H1 (cell line): ENCODE measurements at regions of chr7 and their contacts with region 1.

Region 1: DNA sequence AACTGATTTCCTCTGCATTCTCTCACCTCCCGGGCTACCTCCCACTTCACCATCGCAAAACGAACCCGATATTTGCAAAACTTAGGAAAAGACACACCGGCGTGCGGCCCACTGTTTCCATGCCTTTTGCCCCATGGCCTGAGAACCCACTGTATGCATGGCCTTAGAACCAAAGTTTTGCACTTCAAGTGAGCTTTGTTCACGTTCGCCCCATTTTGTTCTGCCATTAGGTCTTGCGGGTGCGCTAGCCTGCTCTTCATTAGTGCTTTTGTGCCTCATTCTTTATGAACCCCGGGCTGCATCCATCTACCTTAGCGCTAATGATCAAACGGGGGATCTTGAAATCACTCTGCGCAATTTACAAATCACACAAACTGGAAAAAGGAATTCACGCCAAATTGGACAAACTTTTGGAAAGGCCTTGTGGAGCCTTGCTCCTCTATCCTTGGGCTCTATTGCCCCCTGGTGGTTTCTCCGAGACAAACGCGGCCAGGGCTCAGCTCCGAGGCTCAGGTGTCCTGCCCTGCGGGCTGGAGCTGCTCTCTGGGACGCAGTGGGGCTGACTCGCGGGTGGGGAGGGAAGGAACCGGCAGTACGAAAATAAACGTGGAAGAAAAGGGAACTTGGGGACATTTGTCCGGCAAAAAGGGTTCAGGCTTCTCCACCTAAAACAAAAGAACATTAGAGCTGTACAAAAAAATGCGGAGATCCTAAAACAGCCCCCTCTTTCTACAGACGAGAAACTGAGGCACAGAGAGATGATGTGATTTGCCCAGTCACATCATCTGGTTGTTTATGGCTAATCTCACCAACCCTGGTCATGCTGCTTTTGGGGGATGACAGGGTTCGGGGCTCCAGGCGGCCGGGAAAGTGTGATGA is 300.4 kb upstream of the NFE2L3 start:
- DNase-seq: peak in 1 of 2 experiments; percentile 91
- H3K4me3 ChIP-seq: peak overlapping the region; percentile 22 to 68 (median 34)
- H3K27ac ChIP-seq: no peak overlapping the region
- H3K4me1 ChIP-seq: peaks cover 0 to 5% (median 3%) of the 10 kb centered on the region in 4 experiments; a peak in 5 of 7 replicates
- H3K27me3 ChIP-seq: peaks cover 16 to 44% (median 32%) of the 10 kb centered on the region in 4 experiments; a peak in 6 of 7 replicates
- CTCF ChIP-seq: peak; percentile 74 to 89 (median 88)
- EP300 ChIP-seq: no peak
- POLR2A ChIP-seq: no peak
- RAD21 ChIP-seq: peak; percentile 94 to 95

Region 2: GRCh38 chr7:25578991-25579777 is 272.4 kb before region 1 on chr7:
- CTCF ChIA-PET with region 1: interaction called, 10 read pairs
- POLR2A ChIA-PET with region 1: interaction called, 3 read pairs
- DNase-seq: no peak
- H3K4me3 ChIP-seq: peak overlapping the region in 1 of 4 experiments; percentile 4; a peak in 1 of 8 replicates
- H3K27ac ChIP-seq: no peak overlapping the region
- H3K4me1 ChIP-seq: no peaks in the 10 kb centered on the region
- H3K27me3 ChIP-seq: peaks cover 0 to 2% (median under 1%) of the 10 kb centered on the region in 4 experiments; a peak in 3 of 7 replicates
- CTCF ChIP-seq: no peak
- EP300 ChIP-seq: no peak
- POLR2A ChIP-seq: no peak
- RAD21 ChIP-seq: no peak

Region 3: DNA sequence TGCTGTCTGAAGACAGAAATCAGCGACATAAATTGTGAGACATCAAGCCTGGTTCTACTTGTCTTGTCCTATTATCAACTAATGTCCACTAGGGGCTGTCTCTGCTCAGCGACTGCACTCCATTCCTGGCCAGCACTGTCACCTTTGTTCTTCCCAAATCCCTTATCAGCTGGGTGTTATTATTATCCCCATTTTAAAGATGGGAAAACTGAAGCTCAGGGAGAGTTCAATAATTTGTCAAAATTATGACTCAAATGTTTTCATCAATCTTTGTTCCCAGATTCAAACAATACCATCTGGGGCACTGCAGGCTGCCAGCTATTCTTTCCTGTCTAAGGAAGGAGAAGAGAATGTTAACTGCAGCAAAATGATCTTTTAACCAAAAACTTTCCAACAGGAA is 131.1 kb before region 1 on chr7:
- CTCF ChIA-PET with region 1: interaction called, 25 read pairs
- POLR2A ChIA-PET with region 1: no interaction called
- DNase-seq: no peak
- H3K4me3 ChIP-seq: no peak overlapping the region
- H3K27ac ChIP-seq: no peak overlapping the region
- H3K4me1 ChIP-seq: peaks cover 0 to 2% (median 0%) of the 10 kb centered on the region in 4 experiments; a peak in 3 of 7 replicates
- H3K27me3 ChIP-seq: no peaks in the 10 kb centered on the region
- CTCF ChIP-seq: peak; percentile 51 to 74 (median 52)
- EP300 ChIP-seq: no peak
- POLR2A ChIP-seq: no peak
- RAD21 ChIP-seq: peak; percentile 64 to 76

Region 4: GRCh38 chr7:25839084-25839769 is 12.3 kb before region 1 on chr7:
- CTCF ChIA-PET with region 1: interaction called, 37 read pairs
- POLR2A ChIA-PET with region 1: no interaction called
- DNase-seq: no peak
- H3K4me3 ChIP-seq: no peak overlapping the region
- H3K27ac ChIP-seq: no peak overlapping the region
- H3K4me1 ChIP-seq: no peaks in the 10 kb centered on the region; a peak in 1 of 7 replicates
- H3K27me3 ChIP-seq: no peaks in the 10 kb centered on the region
- CTCF ChIP-seq: peak in 2 of 3 experiments; percentile 36 to 59; a peak in 2 of 4 replicates
- EP300 ChIP-seq: no peak
- POLR2A ChIP-seq: no peak
- RAD21 ChIP-seq: peak; percentile 31 to 37; a peak in 3 of 4 replicates

Region 5: GRCh38 chr7:25876092-25876491 is 24.5 kb after region 1 on chr7:
- CTCF ChIA-PET with region 1: no interaction called
- POLR2A ChIA-PET with region 1: no interaction called
- DNase-seq: no peak
- H3K4me3 ChIP-seq: no peak overlapping the region
- H3K27ac ChIP-seq: no peak overlapping the region
- H3K4me1 ChIP-seq: peaks cover 0 to 7% (median 0%) of the 10 kb centered on the region in 4 experiments; a peak in 2 of 7 replicates
- H3K27me3 ChIP-seq: no peaks in the 10 kb centered on the region
- CTCF ChIP-seq: no peak
- EP300 ChIP-seq: no peak
- POLR2A ChIP-seq: no peak
- RAD21 ChIP-seq: no peak